ENCODE measurements at regions of chr10 and their contacts with region 1.

Region 1: DNA sequence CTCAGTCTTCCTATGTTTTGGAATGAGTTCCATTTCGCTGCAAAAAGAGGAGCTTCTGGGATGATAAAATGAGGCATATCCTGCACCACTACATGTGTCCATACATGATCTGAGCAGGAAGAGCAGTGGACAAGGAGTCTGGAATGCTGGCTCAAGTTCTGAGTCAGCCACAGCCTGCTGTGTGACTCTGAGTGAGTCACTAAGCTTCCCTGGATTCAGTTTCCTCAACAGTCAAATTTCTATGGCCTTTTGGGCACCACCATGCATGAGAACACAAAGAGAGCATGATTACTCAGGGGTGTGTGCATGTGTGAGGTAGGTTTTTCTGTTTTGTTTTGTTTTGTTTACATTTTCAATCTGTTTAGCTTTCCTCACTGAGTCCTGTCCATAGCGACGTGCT is 254.6 kb downstream of the ANKRD30A start:
- DNase-seq: peak; percentile 90
- H3K4me3 ChIP-seq: no peak overlapping the region
- H3K27ac ChIP-seq: peak overlapping the region; percentile 63
- H3K4me1 ChIP-seq: peaks cover 9% of the 10 kb centered on the region
- H3K27me3 ChIP-seq: no peaks in the 10 kb centered on the region
- CTCF ChIP-seq: no peak

Region 2: GRCh38 chr10:37314862-37315261 is 65.1 kb before region 1 on chr10:
- CTCF ChIA-PET with region 1: no interaction called
- dilution Hi-C with region 1: no loop called
- in situ Hi-C with region 1: no loop called
- intact Hi-C with region 1: loop called (anchors 2 kb)
- DNase-seq: peak; percentile 78
- H3K4me3 ChIP-seq: no peak overlapping the region
- H3K27ac ChIP-seq: no peak overlapping the region
- H3K4me1 ChIP-seq: no peaks in the 10 kb centered on the region
- H3K27me3 ChIP-seq: no peaks in the 10 kb centered on the region
- CTCF ChIP-seq: no peak

Region 3: GRCh38 chr10:37488792-37489657 is 109.0 kb after region 1 on chr10:
- CTCF ChIA-PET with region 1: no interaction called
- dilution Hi-C with region 1: no loop called
- in situ Hi-C with region 1: no loop called
- intact Hi-C with region 1: loop called (anchors 1 kb)
- DNase-seq: peak; percentile 94
- H3K4me3 ChIP-seq: no peak overlapping the region
- H3K27ac ChIP-seq: peak overlapping the region; percentile 2
- H3K4me1 ChIP-seq: no peaks in the 10 kb centered on the region
- H3K27me3 ChIP-seq: no peaks in the 10 kb centered on the region
- CTCF ChIP-seq: no peak

Region 4: DNA sequence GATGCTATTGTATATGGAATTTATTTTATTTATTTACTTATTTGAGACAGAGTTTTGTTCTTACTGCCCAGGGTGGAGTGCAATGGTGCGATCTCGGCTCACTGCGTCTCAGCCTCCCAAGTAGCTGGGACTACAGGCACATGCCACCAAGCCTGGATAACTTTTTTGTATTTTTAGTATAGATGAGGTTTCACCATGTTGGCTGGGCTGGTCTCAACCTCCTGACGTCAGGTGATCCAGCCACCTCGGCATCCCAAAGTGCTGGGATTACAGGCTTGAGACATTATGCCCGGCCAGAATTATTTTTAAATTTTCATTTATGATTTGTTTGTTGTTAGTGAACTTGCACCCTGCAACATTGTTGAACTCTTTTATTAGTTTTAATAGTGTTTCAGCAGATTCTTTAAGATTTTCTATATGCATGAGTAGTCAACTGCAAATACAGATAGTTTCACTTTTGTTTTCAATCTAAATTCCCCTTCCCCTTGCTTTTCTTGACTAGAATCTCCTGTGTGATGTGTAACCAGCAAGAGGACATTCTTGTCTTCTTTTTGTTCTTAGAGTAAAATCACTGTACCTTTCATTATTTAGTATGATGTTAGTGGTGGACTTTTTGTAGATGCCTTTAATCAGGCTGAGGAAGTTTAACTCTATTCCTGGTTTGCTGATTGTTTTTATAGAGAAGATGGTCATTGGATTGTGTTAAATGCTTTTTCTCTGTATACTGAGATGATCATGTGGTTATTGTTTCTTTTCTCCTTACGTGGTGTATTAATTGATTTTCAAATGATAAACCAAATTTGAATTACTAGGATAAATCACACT is 658.3 kb after region 1 on chr10:
- CTCF ChIA-PET with region 1: no interaction called
- dilution Hi-C with region 1: no loop called
- in situ Hi-C with region 1: no loop called
- intact Hi-C with region 1: no loop called
- DNase-seq: no peak
- H3K4me3 ChIP-seq: no peak overlapping the region
- H3K27ac ChIP-seq: no peak overlapping the region
- H3K4me1 ChIP-seq: no peaks in the 10 kb centered on the region
- H3K27me3 ChIP-seq: no peaks in the 10 kb centered on the region
- CTCF ChIP-seq: no peak